Aorta (tissue), 5 donors: ENCODE measurements at regions of chr2 and their contacts with region 1.

Region 1: DNA sequence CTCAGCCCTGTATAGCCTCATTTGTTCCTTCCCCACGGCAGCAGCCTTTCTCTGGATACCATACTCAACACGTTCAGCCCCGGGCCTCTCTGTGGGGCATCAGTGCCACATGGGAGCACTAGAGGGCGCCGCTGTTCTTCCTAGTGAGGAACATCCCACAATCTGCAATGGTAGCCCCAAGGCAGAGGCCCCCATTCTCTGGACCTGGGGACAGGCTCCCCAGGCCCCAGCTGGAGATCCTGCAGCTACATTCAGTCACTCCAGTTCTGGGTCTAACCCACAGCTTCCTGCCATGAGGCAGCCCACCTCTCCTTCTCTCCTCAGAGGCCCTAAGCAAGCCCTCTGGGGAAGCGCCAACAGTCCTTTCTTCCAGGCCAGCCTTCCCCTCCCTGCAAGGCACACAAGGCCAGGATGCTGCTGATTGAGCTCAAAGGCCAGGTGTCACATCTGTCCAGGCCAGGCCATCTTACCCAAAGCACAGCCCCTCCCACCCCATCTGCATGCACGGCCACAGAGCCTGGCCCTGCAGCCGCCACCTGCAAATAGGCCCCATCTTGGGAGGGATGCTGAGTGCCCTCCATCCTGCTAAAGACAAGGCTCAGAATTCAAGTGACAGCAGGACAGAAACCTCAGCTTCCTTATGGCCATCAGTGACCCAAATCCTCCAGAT is 14.3 kb upstream of the SFXN5 start:
- DNase-seq: peak; percentile 88 to 96
- ATAC-seq: peak; percentile 78
- H3K4me3 ChIP-seq: no peak overlapping the region
- H3K27ac ChIP-seq: no peak overlapping the region
- H3K4me1 ChIP-seq: peaks cover 2 to 4% of the 10 kb centered on the region in 2 donors
- H3K27me3 ChIP-seq: no peaks in the 10 kb centered on the region

Region 2: DNA sequence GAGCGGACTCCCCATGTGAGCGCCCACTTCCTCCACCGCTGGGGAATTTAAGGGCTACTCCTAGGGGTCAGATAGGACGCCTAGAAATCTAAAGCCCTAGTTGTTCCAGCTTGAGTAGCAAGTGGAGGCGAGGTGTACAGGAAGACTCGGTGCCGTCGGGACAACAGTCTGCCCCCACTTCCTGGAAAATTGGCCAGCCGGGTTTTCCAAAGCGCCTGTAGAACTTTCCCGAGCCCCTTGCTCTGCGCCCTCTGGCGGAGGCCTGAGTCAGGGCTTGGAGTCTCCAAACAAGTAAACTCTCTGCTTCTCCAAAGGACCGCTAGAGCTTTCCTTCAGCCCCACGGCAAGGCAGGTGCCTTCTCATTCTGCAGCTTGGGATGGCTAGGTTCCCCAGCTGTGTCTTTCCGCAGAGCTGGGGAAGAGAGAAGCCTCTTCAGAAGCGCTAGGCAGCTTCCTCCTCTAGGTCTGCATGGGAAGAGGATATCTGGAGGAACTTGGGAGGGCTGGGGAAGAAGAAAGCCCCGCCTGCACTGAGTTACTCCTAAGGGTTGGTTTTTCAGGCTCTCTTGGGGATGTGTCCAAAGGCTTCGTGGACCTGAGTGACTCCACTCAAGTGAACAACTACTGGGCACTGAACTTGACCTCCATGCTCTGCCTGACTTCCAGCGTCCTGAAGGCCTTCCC is 197.9 kb before region 1 on chr2:
- intact Hi-C with region 1: loop called (anchors 5 to 10 kb)
- DNase-seq: peak; percentile 93 to 97
- ATAC-seq: peak; percentile 83
- H3K4me3 ChIP-seq: peak overlapping the region; percentile 49 to 72
- H3K27ac ChIP-seq: peak overlapping the region; percentile 57 to 78
- H3K4me1 ChIP-seq: no peaks in the 10 kb centered on the region
- H3K27me3 ChIP-seq: no peaks in the 10 kb centered on the region

Region 3: DNA sequence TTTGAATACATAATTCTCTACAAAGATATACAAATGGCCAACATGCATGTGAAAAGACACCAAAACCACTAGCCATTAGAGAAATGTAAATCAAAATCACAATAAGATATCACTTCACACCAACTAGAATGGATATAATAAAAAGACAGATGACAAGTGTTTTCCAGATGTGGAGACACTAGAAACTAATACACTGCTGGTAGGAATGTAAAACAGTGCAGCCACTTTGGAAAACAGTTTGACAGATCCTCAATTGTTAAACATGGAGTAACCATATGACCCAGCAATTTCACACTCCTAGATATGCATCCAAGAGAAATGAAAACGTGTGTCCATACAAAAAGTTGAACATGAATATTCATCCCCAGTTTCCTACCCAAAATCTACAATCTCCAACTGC is 36.7 kb after region 1 on chr2:
- intact Hi-C with region 1: loop called in 1 of 2 experiments (anchors 5 kb)
- DNase-seq: no peak
- ATAC-seq: no peak
- H3K4me3 ChIP-seq: no peak overlapping the region
- H3K27ac ChIP-seq: no peak overlapping the region
- H3K4me1 ChIP-seq: no peaks in the 10 kb centered on the region
- H3K27me3 ChIP-seq: no peaks in the 10 kb centered on the region

Region 4: GRCh38 chr2:73163483-73164367 is 77.9 kb after region 1 on chr2:
- intact Hi-C with region 1: loop called in 1 of 2 experiments (anchors 2 kb)
- DNase-seq: peak; percentile 71 to 86
- ATAC-seq: peak; percentile 82
- H3K4me3 ChIP-seq: no peak overlapping the region
- H3K27ac ChIP-seq: no peak overlapping the region
- H3K4me1 ChIP-seq: no peaks in the 10 kb centered on the region
- H3K27me3 ChIP-seq: no peaks in the 10 kb centered on the region

Region 5: DNA sequence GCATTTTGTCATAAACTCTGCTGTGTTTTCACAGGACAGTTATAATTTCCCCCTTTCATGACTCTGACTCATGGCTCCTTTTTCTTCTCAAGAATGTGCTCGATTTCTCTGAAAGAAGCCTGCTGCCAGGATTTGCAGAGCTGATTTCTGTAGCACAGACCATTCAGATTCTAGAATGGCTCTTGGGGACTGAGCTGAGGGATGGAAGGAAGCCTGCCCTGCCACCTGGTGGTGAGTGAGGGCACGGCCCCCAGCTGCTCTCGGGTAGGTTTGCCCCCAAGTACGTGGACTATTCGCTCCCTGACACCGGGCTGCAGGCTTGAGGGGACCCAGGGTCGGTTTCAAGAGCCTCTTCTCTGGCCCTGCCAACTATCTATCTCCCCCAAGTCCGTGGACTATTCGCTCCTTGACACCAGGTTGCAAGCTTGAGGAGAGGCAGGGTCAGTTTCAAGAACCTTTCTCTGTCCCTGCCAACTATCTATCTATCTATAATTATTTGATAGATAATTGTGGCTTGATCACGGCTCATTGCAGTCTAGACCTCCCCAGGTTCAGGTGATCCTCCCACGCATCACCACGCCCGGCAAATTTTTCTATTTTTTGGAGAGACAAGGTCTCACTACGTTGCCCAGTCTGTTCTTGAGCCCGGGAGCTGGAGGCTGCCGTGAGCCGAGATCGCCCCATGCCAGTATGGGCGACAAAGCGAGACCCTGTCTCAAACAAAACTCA is 126.8 kb after region 1 on chr2:
- intact Hi-C with region 1: loop called (anchors 5 kb)
- DNase-seq: peak; percentile 83 to 90
- ATAC-seq: peak; percentile 90
- H3K4me3 ChIP-seq: no peak overlapping the region
- H3K27ac ChIP-seq: peak overlapping the region; percentile 38 to 85
- H3K4me1 ChIP-seq: no peaks in the 10 kb centered on the region
- H3K27me3 ChIP-seq: no peaks in the 10 kb centered on the region